Spleen (tissue), 13 donors: ENCODE measurements at regions of chr20 and their contacts with region 1.

Region 1: GRCh38 chr20:44080646-44081267 is 106.2 kb downstream of the JPH2 start:
- DNase-seq: no peak
- H3K4me3 ChIP-seq: no peak overlapping the region
- H3K27ac ChIP-seq: no peak overlapping the region
- H3K4me1 ChIP-seq: peaks cover 0 to 12% (median 2%) of the 10 kb centered on the region in 6 donors
- H3K27me3 ChIP-seq: no peaks in the 10 kb centered on the region
- CTCF ChIP-seq: peak; percentile 94 to 99 (median 99)
- POLR2A ChIP-seq: no peak

Region 2: GRCh38 chr20:43456809-43457639 is 623.7 kb before region 1 on chr20:
- intact Hi-C with region 1: loop called (anchors 10 kb)
- DNase-seq: peak; percentile 95
- H3K4me3 ChIP-seq: peak overlapping the region; percentile 64 to 91 (median 86)
- H3K27ac ChIP-seq: peak overlapping the region; percentile 99 to 100 (median 100)
- H3K4me1 ChIP-seq: peaks cover 14 to 47% (median 29%) of the 10 kb centered on the region in 6 donors
- H3K27me3 ChIP-seq: no peaks in the 10 kb centered on the region
- CTCF ChIP-seq: no peak
- POLR2A ChIP-seq: no peak

Region 3: GRCh38 chr20:43749734-43750294 is 330.9 kb before region 1 on chr20:
- intact Hi-C with region 1: loop called (anchors 2 kb)
- DNase-seq: peak; percentile 96
- H3K4me3 ChIP-seq: no peak overlapping the region
- H3K27ac ChIP-seq: peak overlapping the region in 2 of 8 donors; percentile 77 to 82
- H3K4me1 ChIP-seq: peaks cover 4 to 78% (median 42%) of the 10 kb centered on the region in 6 donors
- H3K27me3 ChIP-seq: peaks cover 0 to 48% (median 14%) of the 10 kb centered on the region in 7 donors
- CTCF ChIP-seq: peak; percentile 85 to 100 (median 99)
- POLR2A ChIP-seq: no peak